ENCODE measurements at regions of chr6 and their contacts with region 1.

Region 1: GRCh38 chr6:53598265-53598907 is 53.5 kb upstream of the GCLC start:
- DNase-seq: no peak
- ATAC-seq: no peak
- H3K4me3 ChIP-seq: no peak overlapping the region
- H3K27ac ChIP-seq: no peak overlapping the region
- H3K4me1 ChIP-seq: peaks cover 0 to 3% of the 10 kb centered on the region in 2 experiments; a peak in 2 of 4 replicates
- H3K27me3 ChIP-seq: no peaks in the 10 kb centered on the region
- CTCF ChIP-seq: no peak
- POLR2A ChIP-seq: no peak
- RAD21 ChIP-seq: no peak

Region 2: GRCh38 chr6:53556986-53557715 is 41.2 kb before region 1 on chr6:
- CTCF ChIA-PET with region 1: no interaction called
- POLR2A ChIA-PET with region 1: no interaction called
- RAD21 ChIA-PET with region 1: no interaction called
- intact Hi-C with region 1: loop called (anchors 5 kb)
- DNase-seq: no peak
- ATAC-seq: no peak
- H3K4me3 ChIP-seq: no peak overlapping the region
- H3K27ac ChIP-seq: no peak overlapping the region
- H3K4me1 ChIP-seq: no peaks in the 10 kb centered on the region
- H3K27me3 ChIP-seq: no peaks in the 10 kb centered on the region
- CTCF ChIP-seq: no peak
- POLR2A ChIP-seq: no peak
- RAD21 ChIP-seq: no peak

Region 3: DNA sequence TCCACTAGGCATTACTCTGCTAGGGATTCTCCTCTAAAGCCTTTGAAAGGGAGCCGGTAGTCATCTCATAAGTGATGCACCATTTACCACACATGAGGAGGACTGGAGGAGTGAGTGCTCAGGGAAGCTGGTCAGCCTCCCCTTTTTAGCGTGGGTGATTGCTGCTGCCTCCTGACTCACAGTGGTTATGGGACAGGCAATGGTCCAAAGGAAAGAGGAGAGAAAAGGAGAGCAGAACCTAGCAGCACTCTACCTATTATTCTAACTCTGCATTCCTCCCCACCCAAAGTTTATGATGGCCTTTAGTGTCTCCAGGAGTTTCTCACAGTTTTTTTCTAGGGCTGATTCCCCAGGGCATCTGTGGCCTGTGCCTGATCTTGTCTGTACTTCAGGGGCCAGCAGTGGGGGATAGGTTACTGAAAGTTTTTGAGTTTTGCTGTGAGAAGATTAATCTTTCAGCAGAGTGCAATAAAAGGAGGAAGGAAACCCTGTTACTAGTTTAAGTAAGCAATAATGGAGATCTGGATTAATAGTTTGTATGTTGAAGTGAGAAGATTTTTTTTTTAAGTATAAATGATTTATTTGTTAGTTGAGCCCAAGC is 17.1 kb before region 1 on chr6:
- CTCF ChIA-PET with region 1: no interaction called
- POLR2A ChIA-PET with region 1: no interaction called
- RAD21 ChIA-PET with region 1: no interaction called
- intact Hi-C with region 1: no loop called
- DNase-seq: no peak
- ATAC-seq: no peak
- H3K4me3 ChIP-seq: no peak overlapping the region
- H3K27ac ChIP-seq: no peak overlapping the region
- H3K4me1 ChIP-seq: no peaks in the 10 kb centered on the region
- H3K27me3 ChIP-seq: no peaks in the 10 kb centered on the region
- CTCF ChIP-seq: no peak
- POLR2A ChIP-seq: no peak
- RAD21 ChIP-seq: no peak

Region 4: DNA sequence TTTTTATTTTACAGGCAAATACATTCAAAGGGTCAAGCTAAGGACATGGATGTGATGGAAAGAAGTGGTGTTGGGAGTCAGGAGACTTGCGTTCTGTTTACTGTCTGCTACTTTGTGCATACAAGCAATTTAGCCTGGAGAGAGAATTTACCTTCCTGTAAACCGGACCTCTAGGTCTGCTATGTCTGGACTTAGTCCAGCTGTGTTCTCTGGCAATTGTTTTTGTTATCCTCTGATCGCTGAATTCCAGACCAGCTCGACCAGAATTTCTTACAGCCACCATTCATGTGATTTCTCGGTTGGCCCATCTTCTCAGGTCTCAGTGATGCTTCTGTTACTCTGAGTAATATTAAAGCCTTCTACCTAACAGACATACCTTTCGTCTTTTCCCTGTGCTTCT is 271.6 kb after region 1 on chr6:
- CTCF ChIA-PET with region 1: no interaction called
- POLR2A ChIA-PET with region 1: no interaction called
- RAD21 ChIA-PET with region 1: no interaction called
- intact Hi-C with region 1: no loop called
- DNase-seq: no peak
- ATAC-seq: no peak
- H3K4me3 ChIP-seq: no peak overlapping the region
- H3K27ac ChIP-seq: no peak overlapping the region
- H3K4me1 ChIP-seq: no peaks in the 10 kb centered on the region
- H3K27me3 ChIP-seq: no peaks in the 10 kb centered on the region
- CTCF ChIP-seq: no peak
- POLR2A ChIP-seq: no peak
- RAD21 ChIP-seq: no peak

Measured in HCT116 (cell line).